SK-N-SH (cell line): ENCODE measurements at regions of chr5 and their contacts with region 1.

Region 1: DNA sequence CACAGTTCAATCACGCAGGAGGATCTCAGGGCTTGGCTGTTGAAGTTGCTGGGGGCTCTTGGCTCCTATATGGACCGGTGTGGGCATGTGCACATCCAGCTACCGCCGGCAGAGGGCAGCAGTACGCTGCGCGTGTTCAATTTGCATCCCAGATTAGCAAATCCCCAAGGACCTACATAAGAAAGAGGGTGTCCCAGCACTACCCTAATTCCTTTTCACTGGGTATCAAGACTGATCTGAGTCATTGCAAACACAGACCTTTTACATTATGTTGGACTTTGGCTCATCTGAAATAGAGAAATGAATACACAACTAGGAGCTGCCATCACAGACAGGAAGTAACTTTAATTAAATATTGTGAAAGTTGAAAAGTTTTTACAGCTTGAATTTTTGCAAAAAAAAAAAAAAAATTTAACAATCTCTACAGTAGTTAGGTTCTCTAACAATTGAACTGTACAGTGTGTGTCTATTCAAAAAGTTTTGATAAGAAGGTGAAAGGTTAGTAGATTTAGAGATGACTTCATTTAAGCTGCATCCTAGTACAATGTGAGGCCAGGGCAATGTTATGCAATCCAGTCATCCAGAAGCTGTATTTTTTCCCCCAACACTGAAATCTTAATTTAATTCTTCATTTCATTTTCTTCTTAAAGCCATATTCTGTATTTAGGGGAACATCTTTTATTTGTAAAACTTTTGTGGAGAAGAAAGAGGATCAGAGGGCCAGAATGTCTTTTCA is 404.0 kb downstream of the EBF1 start:
- DNase-seq: peak; percentile 72
- H3K4me3 ChIP-seq: peak overlapping the region in 1 of 2 experiments; percentile 35; a peak in 1 of 4 replicates
- H3K27ac ChIP-seq: no peak overlapping the region
- H3K4me1 ChIP-seq: peaks cover 1 to 3% of the 10 kb centered on the region in 2 experiments
- H3K27me3 ChIP-seq: no peaks in the 10 kb centered on the region
- CTCF ChIP-seq: peak; percentile 99
- EP300 ChIP-seq: no peak
- RAD21 ChIP-seq: peak; percentile 94

Region 2: DNA sequence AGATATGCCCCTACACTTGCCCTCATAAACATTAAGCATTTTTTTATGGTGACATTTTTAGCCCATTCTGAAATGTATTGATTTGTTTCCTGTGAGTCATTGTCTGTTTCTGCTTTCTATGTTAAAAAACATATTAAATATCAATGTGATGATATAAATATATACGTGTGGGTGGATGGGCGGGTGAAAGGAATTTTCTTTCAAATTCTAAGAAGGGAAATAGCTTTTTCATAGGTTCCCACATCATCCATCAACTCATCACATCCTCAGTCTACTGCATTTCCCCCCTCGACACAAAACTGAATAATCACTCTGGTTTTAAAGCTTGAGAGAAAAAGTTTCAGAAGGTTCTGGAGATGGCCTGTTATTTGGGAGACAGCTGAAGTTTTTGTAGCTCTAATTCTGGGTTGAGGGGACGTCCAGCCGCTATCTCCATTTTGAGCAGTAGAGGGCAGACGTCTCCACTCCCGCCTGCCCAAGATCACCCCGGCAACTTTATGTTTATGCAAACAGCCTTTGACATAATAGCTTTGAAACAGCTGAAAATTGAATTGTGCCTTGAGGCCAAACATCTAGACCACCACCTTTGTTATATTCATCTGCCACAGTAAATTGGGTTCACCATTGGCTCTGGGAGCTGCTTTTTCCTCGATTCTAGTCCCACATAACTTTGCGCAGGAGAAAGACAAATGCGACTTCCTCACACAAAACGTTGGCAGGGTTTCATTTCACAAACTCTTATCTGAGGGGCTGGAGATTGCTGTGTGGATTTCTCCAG is 620.6 kb before region 1 on chr5:
- CTCF ChIA-PET with region 1: interaction called, 15 read pairs
- POLR2A ChIA-PET with region 1: no interaction called
- DNase-seq: peak; percentile 61
- H3K4me3 ChIP-seq: no peak overlapping the region; a peak in 1 of 4 replicates
- H3K27ac ChIP-seq: peak overlapping the region in 1 of 2 experiments; percentile 55; a peak in 1 of 4 replicates
- H3K4me1 ChIP-seq: peaks cover 0 to 3% of the 10 kb centered on the region in 2 experiments; a peak in 2 of 4 replicates
- H3K27me3 ChIP-seq: peaks cover 2% of the 10 kb centered on the region; the same call in 1 of the 2 replicates
- CTCF ChIP-seq: peak; percentile 89
- EP300 ChIP-seq: peak in 1 of 2 experiments; percentile 43; a peak in 1 of 4 replicates
- RAD21 ChIP-seq: peak; percentile 83

Region 3: GRCh38 chr5:158174918-158175851 is 520.6 kb before region 1 on chr5:
- CTCF ChIA-PET with region 1: interaction called, 51 read pairs
- POLR2A ChIA-PET with region 1: no interaction called
- DNase-seq: peak; percentile 76
- H3K4me3 ChIP-seq: peak overlapping the region in 1 of 2 experiments; percentile 43; a peak in 1 of 4 replicates
- H3K27ac ChIP-seq: no peak overlapping the region
- H3K4me1 ChIP-seq: peaks cover 0 to 2% of the 10 kb centered on the region in 2 experiments; a peak in 1 of 4 replicates
- H3K27me3 ChIP-seq: no peaks in the 10 kb centered on the region
- CTCF ChIP-seq: peak; percentile 87
- EP300 ChIP-seq: no peak
- RAD21 ChIP-seq: peak; percentile 96

Region 4: DNA sequence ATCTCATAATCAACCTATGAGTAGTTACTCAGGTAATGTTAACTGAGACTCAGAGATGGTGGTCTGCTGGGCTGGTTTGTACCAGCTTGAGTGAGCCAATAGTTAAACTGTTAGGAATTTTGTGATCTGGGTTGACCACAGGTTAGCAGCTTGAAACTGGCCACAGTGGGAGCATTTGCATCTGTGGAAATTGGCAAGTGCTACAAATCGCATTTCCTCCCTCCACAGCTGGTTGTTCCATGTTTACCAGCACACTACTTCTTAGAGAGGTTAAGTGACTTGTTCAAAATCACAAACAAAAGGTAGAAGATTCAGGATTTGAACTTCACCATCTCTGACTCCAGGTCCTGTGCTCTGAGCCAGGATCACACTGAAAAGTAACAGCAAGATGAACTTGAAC is 389.9 kb before region 1 on chr5:
- CTCF ChIA-PET with region 1: no interaction called
- POLR2A ChIA-PET with region 1: no interaction called
- DNase-seq: no peak
- H3K4me3 ChIP-seq: no peak overlapping the region
- H3K27ac ChIP-seq: no peak overlapping the region
- H3K4me1 ChIP-seq: no peaks in the 10 kb centered on the region
- H3K27me3 ChIP-seq: no peaks in the 10 kb centered on the region
- CTCF ChIP-seq: no peak
- EP300 ChIP-seq: no peak
- RAD21 ChIP-seq: no peak

Region 5: DNA sequence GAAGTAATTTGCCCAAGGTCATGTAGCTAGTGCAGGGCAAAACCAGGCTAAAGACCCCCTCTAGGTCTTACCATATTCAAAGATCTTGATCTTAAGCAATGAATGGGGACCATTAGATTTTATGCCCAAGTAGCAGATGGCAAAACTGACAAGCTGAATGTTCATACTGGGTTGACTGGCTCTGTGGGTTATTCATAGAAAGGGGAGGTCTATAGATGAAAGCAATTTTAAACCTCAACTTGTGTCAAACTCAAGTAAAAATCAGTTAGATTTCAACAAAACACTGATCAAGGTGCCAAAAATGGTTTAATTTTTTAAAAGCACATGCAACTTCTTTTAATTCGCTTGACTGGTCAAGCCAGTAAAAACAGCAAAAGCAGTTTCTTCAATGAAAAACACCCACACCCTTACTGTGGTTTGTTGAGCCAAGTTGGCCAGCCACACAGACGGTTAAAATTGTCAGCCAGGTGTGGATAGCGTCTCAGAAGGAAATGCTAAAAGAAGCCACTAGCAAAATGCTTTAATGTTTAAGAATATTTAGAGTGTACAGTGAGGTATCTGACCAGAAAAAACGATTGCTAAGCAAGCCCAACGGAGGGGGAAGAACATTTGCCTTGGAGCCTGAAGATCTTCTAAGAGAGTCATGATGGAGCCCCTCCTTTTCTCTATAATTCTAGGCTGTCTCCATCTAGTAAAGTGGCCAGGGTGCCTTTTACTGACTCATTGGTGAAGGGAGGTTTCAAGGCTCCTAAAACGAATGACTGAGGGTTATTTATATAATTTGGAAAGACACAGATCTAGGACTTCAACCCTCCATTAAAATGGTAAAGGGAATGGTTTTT is 297.2 kb before region 1 on chr5:
- CTCF ChIA-PET with region 1: no interaction called
- POLR2A ChIA-PET with region 1: no interaction called
- DNase-seq: no peak
- H3K4me3 ChIP-seq: no peak overlapping the region
- H3K27ac ChIP-seq: no peak overlapping the region
- H3K4me1 ChIP-seq: no peaks in the 10 kb centered on the region
- H3K27me3 ChIP-seq: no peaks in the 10 kb centered on the region
- CTCF ChIP-seq: no peak
- EP300 ChIP-seq: no peak
- RAD21 ChIP-seq: no peak

Region 6: GRCh38 chr5:158711927-158712529 is 16.3 kb after region 1 on chr5:
- CTCF ChIA-PET with region 1: interaction called, 10 read pairs
- POLR2A ChIA-PET with region 1: no interaction called
- DNase-seq: no peak
- H3K4me3 ChIP-seq: no peak overlapping the region
- H3K27ac ChIP-seq: no peak overlapping the region
- H3K4me1 ChIP-seq: peaks cover 0 to 4% of the 10 kb centered on the region in 2 experiments; a peak in 1 of 4 replicates
- H3K27me3 ChIP-seq: no peaks in the 10 kb centered on the region
- CTCF ChIP-seq: no peak
- EP300 ChIP-seq: no peak
- RAD21 ChIP-seq: no peak

Region 7: GRCh38 chr5:159061179-159061796 is 365.5 kb after region 1 on chr5:
- CTCF ChIA-PET with region 1: interaction called, 11 read pairs
- POLR2A ChIA-PET with region 1: no interaction called
- DNase-seq: peak; percentile 41
- H3K4me3 ChIP-seq: peak overlapping the region; percentile 37 to 45
- H3K27ac ChIP-seq: peak overlapping the region; percentile 54 to 78
- H3K4me1 ChIP-seq: peaks cover 0 to 13% of the 10 kb centered on the region in 2 experiments; a peak in 2 of 4 replicates
- H3K27me3 ChIP-seq: no peaks in the 10 kb centered on the region
- CTCF ChIP-seq: no peak
- EP300 ChIP-seq: no peak; a peak in 1 of 4 replicates
- RAD21 ChIP-seq: 0 out of 2 replicates have a peak, but pooled peaks have one; percentile 10

Region 8: GRCh38 chr5:159100025-159100781 is 404.4 kb after region 1 on chr5:
- CTCF ChIA-PET with region 1: interaction called, 178 read pairs
- POLR2A ChIA-PET with region 1: no interaction called
- DNase-seq: peak; percentile 94
- H3K4me3 ChIP-seq: peak overlapping the region; percentile 65 to 84
- H3K27ac ChIP-seq: peak overlapping the region; percentile 74 to 90
- H3K4me1 ChIP-seq: peaks cover 5 to 8% of the 10 kb centered on the region in 2 experiments; a peak in 2 of 4 replicates
- H3K27me3 ChIP-seq: peaks cover 18% of the 10 kb centered on the region; the same call in 1 of the 2 replicates
- CTCF ChIP-seq: no peak
- EP300 ChIP-seq: no peak; a peak in 1 of 4 replicates
- RAD21 ChIP-seq: peak; percentile 13; the same call in 1 of the 2 replicates

Region 9: GRCh38 chr5:159112436-159112835 is 416.7 kb after region 1 on chr5:
- CTCF ChIA-PET with region 1: interaction called, 178 read pairs
- POLR2A ChIA-PET with region 1: no interaction called
- DNase-seq: no peak
- H3K4me3 ChIP-seq: no peak overlapping the region
- H3K27ac ChIP-seq: no peak overlapping the region
- H3K4me1 ChIP-seq: no peaks in the 10 kb centered on the region
- H3K27me3 ChIP-seq: no peaks in the 10 kb centered on the region; the same call in 1 of the 2 replicates
- CTCF ChIP-seq: no peak
- EP300 ChIP-seq: no peak
- RAD21 ChIP-seq: no peak